Activated CD4-positive, alpha-beta T cell treated with anti-CD3 and anti-CD28 coated beads for 36 hours (primary cell): ENCODE measurements at regions of chr3 and their contacts with region 1.

Region 1: DNA sequence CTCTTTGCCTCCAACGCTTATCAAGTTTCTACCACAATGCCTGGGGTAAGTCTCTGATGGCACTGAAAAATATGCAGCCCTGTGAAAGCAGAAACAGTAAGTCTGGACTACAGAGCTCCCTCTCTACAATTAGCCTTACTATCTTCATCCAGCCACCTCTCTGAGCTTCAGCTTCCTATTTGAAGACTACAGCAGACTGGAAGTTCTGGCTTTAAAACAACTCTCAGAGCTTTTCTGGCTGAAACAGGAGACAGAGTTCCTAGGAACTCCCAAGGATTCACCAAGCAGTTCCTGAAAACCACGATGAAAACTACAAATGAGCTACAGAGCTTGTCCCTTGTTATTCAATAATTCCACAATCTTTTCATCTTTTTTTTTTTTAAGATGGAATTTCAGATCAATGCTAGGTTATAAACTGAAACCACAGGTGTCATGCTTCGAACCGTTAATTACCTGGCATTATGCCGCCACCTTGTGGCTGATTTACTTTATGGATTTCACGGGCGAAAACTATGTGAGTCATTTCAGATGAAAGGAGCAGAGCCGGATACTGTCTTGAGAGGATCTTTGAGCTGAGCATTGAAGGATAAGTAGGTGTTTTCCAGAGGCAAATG is 3.9 kb downstream of the CRYGS start:
- DNase-seq: peak; percentile 89
- ATAC-seq: peak; percentile 66
- H3K4me3 Mint-ChIP-seq: no peak overlapping the region
- H3K27ac Mint-ChIP-seq: peak overlapping the region; percentile 64
- H3K4me1 Mint-ChIP-seq: peaks cover 63% of the 10 kb centered on the region
- H3K27me3 Mint-ChIP-seq: no peaks in the 10 kb centered on the region

Region 2: DNA sequence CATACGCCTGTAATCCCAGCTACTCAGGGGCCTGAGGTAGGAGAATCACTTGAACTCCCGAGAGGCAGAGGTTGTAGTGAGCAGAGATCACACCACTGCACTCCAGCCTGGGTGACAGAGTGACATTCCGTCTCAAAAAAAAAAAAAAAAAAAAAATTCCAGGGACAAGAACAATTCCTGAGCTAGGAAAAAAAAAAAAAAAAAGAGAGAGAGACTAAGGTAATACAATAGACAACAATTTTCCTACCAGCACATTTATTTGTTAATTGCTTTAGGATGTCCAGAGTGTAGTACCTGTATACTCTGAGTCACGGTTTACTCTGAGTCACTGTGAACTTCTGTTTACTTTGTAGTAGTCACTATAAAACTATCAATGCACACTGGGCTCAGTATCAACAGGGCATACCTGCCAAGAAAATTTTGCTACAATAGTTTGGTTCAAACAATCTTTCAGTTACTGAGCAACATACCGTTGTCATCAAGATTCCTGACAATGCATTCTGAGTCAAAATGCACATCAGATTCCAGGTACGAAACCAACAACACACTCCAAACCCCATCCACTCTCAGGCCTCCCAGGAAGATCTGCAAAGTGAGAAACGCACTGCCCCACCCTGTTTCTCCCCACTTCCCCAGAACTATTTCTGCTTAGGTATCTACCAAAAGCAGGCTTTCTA is 743.8 kb before region 1 on chr3:
- CTCF ChIA-PET with region 1: no interaction called
- POLR2A ChIA-PET with region 1: no interaction called
- intact Hi-C with region 1: no loop called
- DNase-seq: no peak
- ATAC-seq: peak; percentile 39
- H3K4me3 Mint-ChIP-seq: no peak overlapping the region
- H3K27ac Mint-ChIP-seq: no peak overlapping the region
- H3K4me1 Mint-ChIP-seq: peaks cover 8% of the 10 kb centered on the region
- H3K27me3 Mint-ChIP-seq: peaks cover 9% of the 10 kb centered on the region

Region 3: GRCh38 chr3:185959609-185960517 is 580.5 kb before region 1 on chr3:
- CTCF ChIA-PET with region 1: interaction called, 4 read pairs
- POLR2A ChIA-PET with region 1: interaction called, 15 read pairs
- intact Hi-C with region 1: no loop called
- DNase-seq: no peak
- ATAC-seq: peak; percentile 61
- H3K4me3 Mint-ChIP-seq: no peak overlapping the region
- H3K27ac Mint-ChIP-seq: no peak overlapping the region
- H3K4me1 Mint-ChIP-seq: peaks cover 1% of the 10 kb centered on the region
- H3K27me3 Mint-ChIP-seq: no peaks in the 10 kb centered on the region

Region 4: GRCh38 chr3:186241910-186242821 is 298.2 kb before region 1 on chr3:
- CTCF ChIA-PET with region 1: interaction called, 14 read pairs
- POLR2A ChIA-PET with region 1: interaction called, 4 read pairs
- intact Hi-C with region 1: loop called in 1 of 2 experiments (anchors 1 kb)
- DNase-seq: peak; percentile 84
- ATAC-seq: peak; percentile 97
- H3K4me3 Mint-ChIP-seq: peak overlapping the region; percentile 30
- H3K27ac Mint-ChIP-seq: no peak overlapping the region
- H3K4me1 Mint-ChIP-seq: peaks cover 9% of the 10 kb centered on the region
- H3K27me3 Mint-ChIP-seq: peaks cover 9% of the 10 kb centered on the region

Region 5: GRCh38 chr3:186456731-186457191 is 83.6 kb before region 1 on chr3:
- CTCF ChIA-PET with region 1: interaction called, 17 read pairs
- POLR2A ChIA-PET with region 1: no interaction called
- intact Hi-C with region 1: loop called in 1 of 2 experiments (anchors 5 kb)
- DNase-seq: no peak
- ATAC-seq: no peak
- H3K4me3 Mint-ChIP-seq: no peak overlapping the region
- H3K27ac Mint-ChIP-seq: no peak overlapping the region
- H3K4me1 Mint-ChIP-seq: peaks cover 6% of the 10 kb centered on the region
- H3K27me3 Mint-ChIP-seq: peaks cover 3% of the 10 kb centered on the region

Region 6: GRCh38 chr3:186506857-186507256 is 33.5 kb before region 1 on chr3:
- CTCF ChIA-PET with region 1: interaction called, 11 read pairs
- POLR2A ChIA-PET with region 1: interaction called, 14 read pairs
- intact Hi-C with region 1: no loop called
- DNase-seq: peak; percentile 76
- ATAC-seq: peak; percentile 76
- H3K4me3 Mint-ChIP-seq: no peak overlapping the region
- H3K27ac Mint-ChIP-seq: peak overlapping the region; percentile 38
- H3K4me1 Mint-ChIP-seq: peaks cover 45% of the 10 kb centered on the region
- H3K27me3 Mint-ChIP-seq: no peaks in the 10 kb centered on the region

Region 7: GRCh38 chr3:186551387-186551786 is 11.1 kb after region 1 on chr3:
- CTCF ChIA-PET with region 1: interaction called, 17 read pairs
- POLR2A ChIA-PET with region 1: no interaction called
- intact Hi-C with region 1: no loop called
- DNase-seq: no peak
- ATAC-seq: no peak
- H3K4me3 Mint-ChIP-seq: no peak overlapping the region
- H3K27ac Mint-ChIP-seq: no peak overlapping the region
- H3K4me1 Mint-ChIP-seq: no peaks in the 10 kb centered on the region
- H3K27me3 Mint-ChIP-seq: no peaks in the 10 kb centered on the region